CD4-positive, alpha-beta memory T cell (primary cell): ENCODE measurements at regions of chr6 and their contacts with region 1.

Region 1: DNA sequence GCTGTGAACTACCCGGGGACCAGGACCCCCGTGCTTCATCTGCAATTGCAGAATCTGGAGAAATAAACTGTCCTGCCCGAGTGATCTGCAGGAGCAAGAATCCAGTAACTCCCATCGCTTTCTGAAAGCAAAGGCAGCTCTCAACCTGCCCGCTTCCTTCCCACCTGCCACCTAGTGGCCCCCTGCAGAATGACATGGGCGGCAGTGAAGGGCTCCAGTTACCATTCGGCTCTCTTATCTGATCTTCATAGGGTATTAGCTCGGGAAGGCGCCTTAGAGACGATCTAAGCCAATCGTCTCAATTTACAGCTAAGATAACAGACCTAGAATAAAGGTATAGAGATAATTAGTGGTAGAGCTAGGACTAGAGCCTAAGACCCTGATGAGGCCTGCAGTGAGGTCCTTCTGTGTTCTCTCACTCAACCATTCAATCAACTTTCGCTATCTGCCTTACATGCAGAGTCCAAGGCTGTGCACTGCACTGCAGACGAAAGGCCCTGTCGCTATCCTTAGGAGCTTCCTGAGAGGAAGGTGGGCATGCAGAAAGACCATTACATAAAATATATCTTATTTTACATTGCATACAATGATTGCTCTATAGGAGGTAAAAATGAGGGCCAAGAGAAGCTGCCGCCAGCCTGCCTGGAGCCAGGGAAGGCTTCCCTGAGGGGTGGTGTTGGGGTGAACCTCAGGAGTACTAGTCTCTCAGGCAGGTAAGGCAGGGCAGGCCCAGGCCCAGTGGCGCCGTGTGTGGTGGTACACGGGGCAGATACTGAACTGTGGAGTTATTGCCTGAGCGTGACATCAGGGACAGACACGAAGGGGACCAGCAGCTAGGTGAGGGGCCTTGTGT is 7.1 kb upstream of the PSMG4 start:
- DNase-seq: peak; percentile 73 to 79 (median 77)
- H3K4me3 ChIP-seq: no peak overlapping the region
- H3K4me3 Mint-ChIP-seq: peak overlapping the region in 5 of 8 donors; percentile 15 to 66 (median 61)
- H3K27ac ChIP-seq: no peak overlapping the region
- H3K27ac Mint-ChIP-seq: peak overlapping the region in 1 of 7 donors; percentile 1
- H3K4me1 ChIP-seq: peaks cover 9% of the 10 kb centered on the region
- H3K4me1 Mint-ChIP-seq: peaks cover 4 to 15% (median 6%) of the 10 kb centered on the region in 4 donors
- H3K27me3 ChIP-seq: no peaks in the 10 kb centered on the region
- H3K27me3 Mint-ChIP-seq: peaks cover 26 to 30% of the 10 kb centered on the region in 2 donors

Region 2: GRCh38 chr6:3013479-3013878 is 238.2 kb before region 1 on chr6:
- CTCF ChIA-PET with region 1: no interaction called
- POLR2A ChIA-PET with region 1: no interaction called
- intact Hi-C with region 1: no loop called
- DNase-seq: no peak
- H3K4me3 ChIP-seq: no peak overlapping the region
- H3K4me3 Mint-ChIP-seq: no peak overlapping the region
- H3K27ac ChIP-seq: no peak overlapping the region
- H3K27ac Mint-ChIP-seq: peak overlapping the region in 4 of 7 donors; percentile 9 to 59 (median 37)
- H3K4me1 ChIP-seq: no peaks in the 10 kb centered on the region
- H3K4me1 Mint-ChIP-seq: peaks cover 0 to 16% (median 6%) of the 10 kb centered on the region in 4 donors
- H3K27me3 ChIP-seq: no peaks in the 10 kb centered on the region
- H3K27me3 Mint-ChIP-seq: no peaks in the 10 kb centered on the region

Region 3: DNA sequence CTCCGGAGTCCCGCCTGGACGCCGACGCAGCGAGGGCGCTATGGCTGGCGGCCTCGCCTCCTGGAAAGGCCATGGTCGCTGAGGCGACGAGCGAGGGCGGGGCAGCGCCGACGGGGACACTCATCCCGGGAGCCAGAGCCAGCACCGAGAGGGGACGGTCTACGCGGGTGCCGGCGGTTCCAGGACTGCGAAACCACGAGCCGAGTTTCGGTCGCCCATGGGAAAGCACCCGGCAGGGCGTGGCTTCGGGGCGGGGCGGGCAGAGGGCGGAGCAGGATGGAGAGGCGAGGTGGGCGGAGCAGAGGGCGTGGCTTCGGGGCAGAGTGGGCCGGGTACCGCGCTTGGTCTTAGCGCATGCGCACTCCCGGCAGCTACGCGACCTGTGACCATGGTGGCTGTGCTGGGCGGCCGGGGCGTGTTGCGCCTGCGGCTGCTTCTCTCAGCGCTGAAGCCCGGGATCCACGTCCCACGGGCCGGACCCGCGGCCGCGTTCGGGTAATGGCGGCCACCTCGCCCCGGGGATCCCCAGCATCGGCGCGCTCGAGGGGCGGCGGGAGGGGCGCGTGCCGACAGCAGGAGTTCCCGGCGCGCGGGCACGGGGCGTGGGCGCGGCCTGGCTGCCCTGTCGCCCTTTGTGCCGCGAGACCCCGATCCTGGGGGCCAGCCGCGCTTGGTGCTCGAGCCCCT is 133.2 kb before region 1 on chr6 and contains the start of gene BPHL:
- CTCF ChIA-PET with region 1: interaction called, 26 read pairs
- POLR2A ChIA-PET with region 1: interaction called, 4 read pairs
- intact Hi-C with region 1: no loop called
- DNase-seq: peak; percentile 98 to 100 (median 99)
- H3K4me3 ChIP-seq: peak within 1 kb of the TSS; percentile 76 to 94
- H3K4me3 Mint-ChIP-seq: peak within 1 kb of the TSS; percentile 75 to 96 (median 91)
- H3K27ac ChIP-seq: peak within 1 kb of the TSS; percentile 87
- H3K27ac Mint-ChIP-seq: peak within 1 kb of the TSS; percentile 93 to 97 (median 96)
- H3K4me1 ChIP-seq: peaks cover 14% of the 10 kb centered on the region
- H3K4me1 Mint-ChIP-seq: peaks cover 7 to 20% (median 14%) of the 10 kb centered on the region in 4 donors
- H3K27me3 ChIP-seq: no peaks in the 10 kb centered on the region
- H3K27me3 Mint-ChIP-seq: no peaks in the 10 kb centered on the region
- total RNA-seq, gene BPHL: 11.9 to 13.7 TPM

Region 4: GRCh38 chr6:3125815-3126214 is 125.9 kb before region 1 on chr6:
- CTCF ChIA-PET with region 1: interaction called, 83 read pairs
- POLR2A ChIA-PET with region 1: no interaction called
- intact Hi-C with region 1: loop called (anchors 1 kb)
- DNase-seq: no peak
- H3K4me3 ChIP-seq: no peak overlapping the region
- H3K4me3 Mint-ChIP-seq: no peak overlapping the region
- H3K27ac ChIP-seq: no peak overlapping the region
- H3K27ac Mint-ChIP-seq: no peak overlapping the region
- H3K4me1 ChIP-seq: no peaks in the 10 kb centered on the region
- H3K4me1 Mint-ChIP-seq: peaks cover 0 to 4% (median 0%) of the 10 kb centered on the region in 4 donors
- H3K27me3 ChIP-seq: no peaks in the 10 kb centered on the region
- H3K27me3 Mint-ChIP-seq: no peaks in the 10 kb centered on the region

Region 5: GRCh38 chr6:3157131-3157927 is 94.4 kb before region 1 on chr6 and contains the start of gene TUBB2A:
- CTCF ChIA-PET with region 1: interaction called, 37 read pairs
- POLR2A ChIA-PET with region 1: interaction called, 7 read pairs
- intact Hi-C with region 1: loop called (anchors 1 kb)
- DNase-seq: peak; percentile 83 to 95 (median 91)
- H3K4me3 ChIP-seq: peak within 1 kb of the TSS; percentile 49 to 81
- H3K4me3 Mint-ChIP-seq: peak within 1 kb of the TSS; percentile 88 to 95 (median 92)
- H3K27ac ChIP-seq: peak within 1 kb of the TSS; percentile 81
- H3K27ac Mint-ChIP-seq: peak within 1 kb of the TSS; percentile 86 to 97 (median 94)
- H3K4me1 ChIP-seq: peaks cover 30% of the 10 kb centered on the region
- H3K4me1 Mint-ChIP-seq: peaks cover 21 to 44% (median 32%) of the 10 kb centered on the region in 4 donors
- H3K27me3 ChIP-seq: no peaks in the 10 kb centered on the region
- H3K27me3 Mint-ChIP-seq: no peaks in the 10 kb centered on the region
- total RNA-seq, gene TUBB2A: 5.2 to 5.4 TPM

Region 6: GRCh38 chr6:3162565-3163247 is 89.0 kb before region 1 on chr6:
- CTCF ChIA-PET with region 1: interaction called, 37 read pairs
- POLR2A ChIA-PET with region 1: interaction called, 7 read pairs
- intact Hi-C with region 1: loop called (anchors 1 kb)
- DNase-seq: peak; percentile 48 to 72 (median 55)
- H3K4me3 ChIP-seq: peak overlapping the region; percentile 53 to 61
- H3K4me3 Mint-ChIP-seq: peak overlapping the region; percentile 84 to 91 (median 85)
- H3K27ac ChIP-seq: peak overlapping the region; percentile 58
- H3K27ac Mint-ChIP-seq: peak overlapping the region; percentile 81 to 97 (median 87)
- H3K4me1 ChIP-seq: peaks cover 35% of the 10 kb centered on the region
- H3K4me1 Mint-ChIP-seq: peaks cover 27 to 49% (median 33%) of the 10 kb centered on the region in 4 donors
- H3K27me3 ChIP-seq: no peaks in the 10 kb centered on the region
- H3K27me3 Mint-ChIP-seq: peaks cover 0 to under 1% of the 10 kb centered on the region in 2 donors

Region 7: GRCh38 chr6:3227363-3228045 is 24.2 kb before region 1 on chr6 and contains the start of gene TUBB2B:
- CTCF ChIA-PET with region 1: interaction called, 14 read pairs
- POLR2A ChIA-PET with region 1: no interaction called
- intact Hi-C with region 1: no loop called
- DNase-seq: no peak
- H3K4me3 ChIP-seq: peak within 1 kb of the TSS; percentile 11 to 22
- H3K4me3 Mint-ChIP-seq: peak within 1 kb of the TSS; percentile 73 to 87 (median 78)
- H3K27ac ChIP-seq: no peak within 1 kb of the TSS
- H3K27ac Mint-ChIP-seq: peak within 1 kb of the TSS in 1 of 7 donors; percentile 83
- H3K4me1 ChIP-seq: peaks cover 57% of the 10 kb centered on the region
- H3K4me1 Mint-ChIP-seq: peaks cover 27 to 58% (median 46%) of the 10 kb centered on the region in 4 donors
- H3K27me3 ChIP-seq: peaks cover 47% of the 10 kb centered on the region
- H3K27me3 Mint-ChIP-seq: peaks cover 39 to 54% of the 10 kb centered on the region in 2 donors
- total RNA-seq, gene TUBB2B: not detected

Region 8: DNA sequence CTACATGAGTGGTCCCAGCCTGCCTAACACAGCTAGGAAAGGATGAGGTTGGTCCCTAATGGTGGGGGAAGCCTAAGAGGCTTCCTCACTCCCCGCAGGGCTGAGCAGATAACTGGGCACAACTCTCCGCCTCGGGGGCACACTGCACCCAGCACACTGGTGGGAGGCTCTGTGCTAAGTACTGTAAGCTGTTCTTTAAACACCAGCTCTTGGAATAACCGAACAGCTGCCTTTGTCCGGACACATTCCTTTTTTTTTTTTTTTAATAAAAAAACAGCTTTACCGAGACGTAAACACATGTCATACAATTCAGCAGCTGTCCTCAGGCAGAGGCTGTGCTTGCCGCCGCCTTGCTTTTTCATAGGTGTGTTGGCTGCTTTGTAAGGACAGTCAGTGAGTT is 14.0 kb after region 1 on chr6:
- CTCF ChIA-PET with region 1: interaction called, 33 read pairs
- POLR2A ChIA-PET with region 1: interaction called, 10 read pairs
- intact Hi-C with region 1: no loop called
- DNase-seq: no peak
- H3K4me3 ChIP-seq: no peak overlapping the region
- H3K4me3 Mint-ChIP-seq: no peak overlapping the region
- H3K27ac ChIP-seq: no peak overlapping the region
- H3K27ac Mint-ChIP-seq: no peak overlapping the region
- H3K4me1 ChIP-seq: peaks cover 32% of the 10 kb centered on the region
- H3K4me1 Mint-ChIP-seq: peaks cover 33 to 74% (median 56%) of the 10 kb centered on the region in 4 donors
- H3K27me3 ChIP-seq: no peaks in the 10 kb centered on the region
- H3K27me3 Mint-ChIP-seq: no peaks in the 10 kb centered on the region